ENCODE measurements at regions of chr6 and their contacts with region 1.

Region 1: GRCh38 chr6:118709859-118710350 is 58.5 kb upstream of the CEP85L start:
- DNase-seq: peak; percentile 73
- H3K4me3 Mint-ChIP-seq: peak overlapping the region; percentile 97
- H3K27ac Mint-ChIP-seq: peak overlapping the region; percentile 96
- H3K4me1 Mint-ChIP-seq: peaks cover 77% of the 10 kb centered on the region
- H3K27me3 Mint-ChIP-seq: no peaks in the 10 kb centered on the region

Region 2: GRCh38 chr6:118436482-118436881 is 273.4 kb before region 1 on chr6:
- intact Hi-C with region 1: no loop called
- DNase-seq: no peak
- H3K4me3 Mint-ChIP-seq: no peak overlapping the region
- H3K27ac Mint-ChIP-seq: no peak overlapping the region
- H3K4me1 Mint-ChIP-seq: no peaks in the 10 kb centered on the region
- H3K27me3 Mint-ChIP-seq: no peaks in the 10 kb centered on the region

Region 3: DNA sequence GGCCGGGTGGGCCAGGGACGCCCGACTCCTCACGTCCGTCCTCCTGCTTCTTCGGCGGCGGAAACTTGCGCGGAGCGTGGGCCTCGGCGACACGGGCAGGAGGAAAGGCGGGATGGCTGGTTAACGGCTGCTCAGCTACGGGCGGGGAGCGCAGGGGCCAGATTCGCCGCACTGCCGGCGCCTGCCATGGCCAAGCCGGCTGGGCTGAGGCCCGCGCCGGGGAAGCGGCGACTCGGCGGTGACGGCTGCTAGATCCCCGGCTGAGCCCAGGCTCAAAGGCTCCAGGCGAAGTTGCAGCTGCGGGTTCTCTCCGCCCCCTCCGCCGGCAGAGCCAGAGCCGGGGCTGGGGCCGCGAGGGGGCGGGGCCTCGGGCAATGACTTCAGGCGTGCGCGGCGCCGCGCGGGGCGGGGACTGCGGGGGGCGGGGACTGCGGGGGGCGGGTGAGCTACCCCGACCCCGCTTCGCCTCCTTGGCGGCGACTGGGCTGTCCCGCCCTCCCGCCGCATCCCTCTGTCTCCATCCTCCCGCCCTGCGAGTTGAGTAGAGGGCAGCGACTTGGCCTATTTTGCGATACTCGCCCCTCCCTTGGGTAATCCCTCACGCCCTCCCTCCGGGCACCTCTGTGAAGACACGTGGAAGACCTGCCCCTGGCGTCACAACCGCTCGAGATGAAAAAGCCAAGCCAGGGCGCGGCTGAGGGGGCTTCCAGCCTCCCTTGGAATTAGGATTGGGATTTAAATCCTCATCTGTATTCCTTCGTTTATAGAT is 58.4 kb before region 1 on chr6 and contains the start of gene CEP85L:
- intact Hi-C with region 1: loop called (anchors 1 kb)
- DNase-seq: peak; percentile 85
- H3K4me3 Mint-ChIP-seq: peak within 1 kb of the TSS; percentile 84
- H3K27ac Mint-ChIP-seq: peak within 1 kb of the TSS; percentile 89
- H3K4me1 Mint-ChIP-seq: peaks cover 36% of the 10 kb centered on the region
- H3K27me3 Mint-ChIP-seq: no peaks in the 10 kb centered on the region
- total RNA-seq, gene CEP85L: 34.2 and 36.7 TPM in 2 replicates

Region 4: GRCh38 chr6:118680452-118681095 is 29.3 kb before region 1 on chr6:
- intact Hi-C with region 1: loop called (anchors 1 kb)
- DNase-seq: no peak
- H3K4me3 Mint-ChIP-seq: peak overlapping the region; percentile 35
- H3K27ac Mint-ChIP-seq: peak overlapping the region; percentile 81
- H3K4me1 Mint-ChIP-seq: peaks cover 54% of the 10 kb centered on the region
- H3K27me3 Mint-ChIP-seq: no peaks in the 10 kb centered on the region

Region 5: DNA sequence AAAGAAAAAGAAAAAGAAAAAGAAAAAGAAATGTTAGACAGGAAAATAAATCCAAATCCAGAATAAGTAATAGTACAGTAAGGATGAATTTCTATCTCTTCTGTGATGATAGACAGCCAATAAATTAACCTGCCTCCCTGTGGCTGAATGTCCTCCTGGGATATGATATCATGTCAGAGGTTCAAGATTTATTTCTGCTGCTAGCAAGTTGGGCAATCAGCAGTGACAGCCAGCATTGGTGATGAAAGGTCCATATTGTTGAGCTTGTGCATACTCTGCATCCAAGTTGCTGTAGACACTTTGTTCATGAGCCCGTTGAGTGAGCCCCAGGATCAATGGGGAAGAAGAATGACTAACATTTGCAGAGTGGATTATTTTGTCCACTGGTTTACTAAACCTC is 13.6 kb before region 1 on chr6:
- intact Hi-C with region 1: no loop called
- DNase-seq: no peak
- H3K4me3 Mint-ChIP-seq: no peak overlapping the region
- H3K27ac Mint-ChIP-seq: no peak overlapping the region
- H3K4me1 Mint-ChIP-seq: peaks cover 31% of the 10 kb centered on the region
- H3K27me3 Mint-ChIP-seq: no peaks in the 10 kb centered on the region

Region 6: DNA sequence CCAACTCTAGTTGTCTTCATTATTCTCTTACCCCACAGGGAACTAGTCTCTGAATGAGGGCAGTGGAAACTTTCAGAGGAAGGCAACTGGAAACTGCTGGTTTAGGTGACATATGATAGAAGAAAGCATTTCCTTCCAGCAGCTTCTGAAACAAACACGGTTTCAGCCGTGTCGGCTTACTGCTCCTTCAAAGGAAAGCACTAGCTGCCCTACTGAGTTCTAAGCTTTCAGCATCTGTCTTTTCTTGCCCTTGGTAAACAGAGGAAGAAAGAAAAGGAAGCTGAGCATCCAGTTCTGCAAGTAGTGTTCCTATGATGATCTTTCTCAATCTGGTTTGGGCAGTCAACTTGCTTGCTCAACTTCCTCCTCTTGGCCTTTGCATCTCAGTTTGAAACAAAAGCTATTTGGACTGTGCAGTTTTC is 59.0 kb after region 1 on chr6:
- intact Hi-C with region 1: loop called (anchors 1 kb)
- DNase-seq: peak; percentile 14
- H3K4me3 Mint-ChIP-seq: no peak overlapping the region
- H3K27ac Mint-ChIP-seq: peak overlapping the region; percentile 65
- H3K4me1 Mint-ChIP-seq: peaks cover 23% of the 10 kb centered on the region
- H3K27me3 Mint-ChIP-seq: no peaks in the 10 kb centered on the region

Region 7: GRCh38 chr6:118843685-118844390 is 133.9 kb after region 1 on chr6:
- intact Hi-C with region 1: loop called (anchors 1 kb)
- DNase-seq: no peak
- H3K4me3 Mint-ChIP-seq: peak overlapping the region; percentile 22
- H3K27ac Mint-ChIP-seq: peak overlapping the region; percentile 59
- H3K4me1 Mint-ChIP-seq: peaks cover 25% of the 10 kb centered on the region
- H3K27me3 Mint-ChIP-seq: no peaks in the 10 kb centered on the region

Measured in activated T-helper 2 cell treated with anti-CD3 and anti-CD28 coated beads, Interferon-gamma antibody, Interleukin-2, Interleukin-4, amounts not matched to agents 10 μg/mL and 5 μg/mL and 100 μg/mL, durations not matched to agents 14 hours and 24 hours and 36 hours (primary cell).